RWPE1 (cell line): ENCODE measurements at regions of chr9 and their contacts with region 1.

Region 1: DNA sequence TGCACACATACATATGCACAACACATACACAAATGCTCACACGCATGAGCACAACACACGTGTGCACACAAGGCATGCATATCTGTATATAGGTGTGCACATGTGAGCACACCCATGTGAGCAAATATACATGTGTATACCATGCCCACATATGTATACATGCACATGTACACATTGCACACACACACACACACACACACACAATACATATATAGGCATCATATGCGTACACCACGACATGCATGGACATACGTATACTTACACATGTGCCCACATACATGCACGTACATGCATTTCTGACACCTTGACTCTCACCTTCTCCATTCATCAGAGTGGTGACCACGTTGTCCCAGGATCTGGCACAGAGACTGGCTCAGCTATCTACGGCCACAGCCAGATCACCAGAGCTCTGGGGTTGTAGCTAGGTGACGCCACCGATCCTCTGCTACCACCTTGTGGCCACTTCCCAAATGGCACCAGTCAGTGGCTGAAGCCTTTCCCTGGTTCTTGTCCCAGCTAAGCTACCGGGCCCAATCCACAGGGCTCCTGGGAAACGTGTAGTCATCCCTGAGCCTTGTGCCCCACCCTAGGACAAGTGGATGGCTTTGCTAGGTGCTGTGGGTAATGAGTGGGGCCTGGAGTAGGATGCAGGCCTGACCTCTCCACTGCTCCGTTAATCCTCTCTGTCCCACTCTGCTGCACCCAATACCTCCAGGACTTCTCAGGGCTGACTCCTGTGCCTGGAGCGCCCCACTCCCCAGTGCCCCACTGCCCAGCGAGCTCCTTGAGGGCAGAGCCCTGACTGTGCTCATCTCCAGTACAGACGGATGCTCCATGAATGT is 194.4 kb downstream of the RGS3 start:
- DNase-seq: peak; percentile 94
- H3K27ac ChIP-seq: no peak overlapping the region
- CTCF ChIP-seq: peak; percentile 100

Region 2: DNA sequence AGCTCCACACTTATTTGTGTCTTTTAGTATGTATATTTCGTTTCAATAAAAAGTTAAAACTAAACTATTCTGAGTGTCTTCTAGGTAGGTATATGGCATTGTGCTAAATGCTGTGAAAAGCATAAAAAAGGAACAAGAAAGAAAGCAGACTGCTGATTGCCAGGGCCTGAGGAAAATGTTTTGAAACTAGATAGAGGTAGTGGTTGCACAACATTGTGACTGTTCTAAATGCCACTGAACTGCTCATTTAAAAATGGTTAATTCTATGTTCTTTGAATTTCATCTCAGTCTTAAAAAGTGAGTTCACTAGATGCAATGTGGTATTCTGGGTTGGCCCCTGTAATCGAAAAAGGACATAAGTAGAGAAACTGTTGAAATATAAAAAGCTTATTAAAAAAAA is 254.3 kb before region 1 on chr9:
- CTCF ChIA-PET with region 1: interaction called, 9 read pairs
- POLR2A ChIA-PET with region 1: interaction called, 12 read pairs
- DNase-seq: no peak
- H3K27ac ChIP-seq: no peak overlapping the region
- CTCF ChIP-seq: no peak

Region 3: DNA sequence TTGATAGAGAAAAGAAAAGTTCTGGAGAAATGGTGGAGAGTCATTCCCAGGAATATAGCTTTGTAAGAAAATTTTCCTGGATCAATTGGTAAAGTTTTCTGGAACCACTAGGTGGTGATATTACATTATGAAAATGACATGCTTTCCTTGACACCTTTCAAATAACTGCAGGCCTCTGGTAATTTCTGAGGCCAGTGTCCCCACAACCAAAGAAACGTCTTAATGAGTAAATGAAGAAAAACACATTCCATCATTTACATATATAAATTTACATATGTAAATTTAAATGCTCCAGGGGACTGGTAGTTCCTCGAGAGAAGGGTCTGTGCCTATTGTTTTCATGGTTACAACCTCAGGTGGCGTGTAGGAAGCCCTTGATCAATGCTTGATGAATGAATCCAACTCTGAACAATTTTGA is 211.6 kb before region 1 on chr9:
- CTCF ChIA-PET with region 1: interaction called, 119 read pairs
- POLR2A ChIA-PET with region 1: no interaction called
- DNase-seq: peak; percentile 84
- H3K27ac ChIP-seq: no peak overlapping the region
- CTCF ChIP-seq: peak; percentile 79

Region 4: DNA sequence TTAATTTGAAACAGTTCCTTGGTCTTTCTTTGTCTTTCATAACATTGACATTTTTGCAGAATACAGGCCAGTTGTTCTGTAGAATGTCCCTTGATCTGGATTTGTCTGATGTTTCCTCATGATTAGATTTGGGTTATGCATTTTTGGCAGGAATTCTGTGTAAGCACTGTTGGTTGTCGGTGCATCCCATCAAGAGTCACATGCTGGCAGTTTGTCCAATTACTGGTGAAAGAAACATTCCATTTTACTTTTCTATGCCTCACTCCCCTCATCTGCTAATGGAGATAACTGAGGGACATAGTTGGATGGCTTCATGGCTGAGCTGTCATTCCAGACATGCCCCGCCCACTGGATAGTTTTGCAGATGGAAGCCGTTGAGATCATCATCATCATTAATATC is 210.6 kb after region 1 on chr9:
- CTCF ChIA-PET with region 1: no interaction called
- POLR2A ChIA-PET with region 1: no interaction called
- DNase-seq: no peak
- H3K27ac ChIP-seq: no peak overlapping the region
- CTCF ChIP-seq: no peak